Tibial artery (tissue), 4 donors: ENCODE measurements at regions of chr11 and their contacts with region 1.

Region 1: GRCh38 chr11:121476379-121477032 is 23.7 kb upstream of the SORL1-AS1 start:
- DNase-seq: no peak
- H3K4me3 ChIP-seq: no peak overlapping the region
- H3K27ac ChIP-seq: no peak overlapping the region
- H3K4me1 ChIP-seq: peaks cover 0 to 17% (median 8%) of the 10 kb centered on the region in 4 donors
- H3K27me3 ChIP-seq: no peaks in the 10 kb centered on the region
- CTCF ChIP-seq: no peak

Region 2: DNA sequence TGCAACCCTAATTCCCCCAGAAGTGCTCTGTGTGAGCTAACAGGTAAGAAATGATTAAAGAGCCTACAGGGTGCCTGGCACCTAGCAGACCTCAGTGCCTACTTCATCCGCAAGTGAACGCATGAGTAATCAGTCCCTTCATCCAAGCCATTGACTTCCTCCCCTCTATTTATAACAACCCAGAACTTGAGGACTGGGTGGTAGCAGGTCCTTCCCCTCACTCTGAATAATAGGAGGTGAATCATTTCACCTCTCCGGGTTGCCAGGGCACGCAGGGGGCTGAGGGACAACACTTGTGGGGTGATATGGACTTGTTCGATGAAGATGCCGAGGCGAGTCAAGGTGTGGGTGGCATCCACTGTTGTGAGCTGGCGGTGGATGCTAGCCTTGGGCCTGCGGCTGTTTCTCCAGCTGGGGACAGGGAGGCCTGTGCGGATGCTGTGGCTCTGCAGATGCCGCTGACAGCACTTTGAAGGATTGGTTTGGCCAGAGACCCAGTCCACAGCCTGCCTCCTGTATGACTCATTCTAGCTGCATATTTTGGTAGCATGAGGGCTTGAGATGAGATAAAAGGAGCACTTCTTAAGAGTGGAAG is 12.1 kb before region 1 on chr11:
- intact Hi-C with region 1: no loop called
- DNase-seq: peak; percentile 54 to 80
- H3K4me3 ChIP-seq: no peak overlapping the region
- H3K27ac ChIP-seq: peak overlapping the region; percentile 76 to 79
- H3K4me1 ChIP-seq: peaks cover 0 to 59% (median 52%) of the 10 kb centered on the region in 4 donors
- H3K27me3 ChIP-seq: no peaks in the 10 kb centered on the region
- CTCF ChIP-seq: no peak

Region 3: GRCh38 chr11:121514432-121515334 is 38.2 kb after region 1 on chr11:
- intact Hi-C with region 1: loop called (anchors 5 kb)
- DNase-seq: no peak
- H3K4me3 ChIP-seq: no peak overlapping the region
- H3K27ac ChIP-seq: peak overlapping the region in 1 of 2 donors; percentile 59
- H3K4me1 ChIP-seq: peaks cover 0 to 32% (median 18%) of the 10 kb centered on the region in 4 donors
- H3K27me3 ChIP-seq: no peaks in the 10 kb centered on the region
- CTCF ChIP-seq: no peak